HEK293 (cell line): ENCODE measurements at regions of chr9 and their contacts with region 1.

Region 1: DNA sequence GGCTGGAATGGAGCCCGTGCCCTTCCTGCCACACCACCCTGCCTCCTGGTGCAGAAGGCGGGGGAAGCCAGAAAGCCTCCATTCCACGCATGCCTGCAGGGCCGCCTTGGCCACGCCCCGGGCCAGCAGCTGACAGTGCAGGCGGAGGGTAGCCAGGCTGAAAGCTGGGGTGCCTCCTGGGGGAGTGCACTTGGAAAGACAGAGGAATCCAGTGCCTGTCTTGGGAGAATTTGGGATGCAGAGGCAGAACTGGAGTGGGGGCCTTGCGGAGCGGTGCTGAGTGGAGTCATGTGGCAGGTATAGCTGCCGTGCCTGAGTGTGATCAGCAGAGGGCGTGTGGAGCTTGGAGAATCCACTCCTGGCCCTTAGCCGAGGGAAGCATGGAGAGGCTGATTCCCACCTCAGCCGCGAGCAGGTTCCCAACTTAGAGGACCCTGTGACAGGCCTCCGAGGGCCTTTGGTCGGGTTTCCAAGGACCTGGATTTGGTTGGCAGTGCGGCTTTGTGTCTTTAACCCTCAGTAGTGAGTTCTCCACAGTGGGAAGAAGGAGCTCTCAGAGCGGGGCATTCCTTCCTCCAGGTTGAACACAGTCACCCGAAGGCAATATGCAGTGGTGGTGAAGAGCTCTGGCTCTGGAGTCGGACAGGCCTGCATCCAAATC is 9.1 kb upstream of the URM1 start:
- H3K4me3 ChIP-seq: no peak overlapping the region
- H3K27ac ChIP-seq: no peak overlapping the region
- H3K4me1 ChIP-seq: no peaks in the 10 kb centered on the region
- CTCF ChIP-seq: peak; percentile 88

Region 2: GRCh38 chr9:128275996-128276573 is 86.0 kb before region 1 on chr9 and contains the starts of genes GOLGA2 and SWI5:
- CTCF ChIA-PET with region 1: no interaction called
- POLR2A ChIA-PET with region 1: no interaction called
- H3K4me3 ChIP-seq: peak within 1 kb of the TSS; percentile 83
- H3K27ac ChIP-seq: peak within 1 kb of the TSS; percentile 51; the same call in 1 of the 2 replicates
- H3K4me1 ChIP-seq: no peaks in the 10 kb centered on the region
- CTCF ChIP-seq: no peak

Region 3: GRCh38 chr9:128406848-128407391 is 44.8 kb after region 1 on chr9:
- CTCF ChIA-PET with region 1: interaction called, 69 read pairs
- POLR2A ChIA-PET with region 1: interaction called, 3 read pairs
- H3K4me3 ChIP-seq: no peak overlapping the region
- H3K27ac ChIP-seq: no peak overlapping the region
- H3K4me1 ChIP-seq: no peaks in the 10 kb centered on the region
- CTCF ChIP-seq: no peak